ENCODE measurements at regions of chr9 and their contacts with region 1.

Region 1: DNA sequence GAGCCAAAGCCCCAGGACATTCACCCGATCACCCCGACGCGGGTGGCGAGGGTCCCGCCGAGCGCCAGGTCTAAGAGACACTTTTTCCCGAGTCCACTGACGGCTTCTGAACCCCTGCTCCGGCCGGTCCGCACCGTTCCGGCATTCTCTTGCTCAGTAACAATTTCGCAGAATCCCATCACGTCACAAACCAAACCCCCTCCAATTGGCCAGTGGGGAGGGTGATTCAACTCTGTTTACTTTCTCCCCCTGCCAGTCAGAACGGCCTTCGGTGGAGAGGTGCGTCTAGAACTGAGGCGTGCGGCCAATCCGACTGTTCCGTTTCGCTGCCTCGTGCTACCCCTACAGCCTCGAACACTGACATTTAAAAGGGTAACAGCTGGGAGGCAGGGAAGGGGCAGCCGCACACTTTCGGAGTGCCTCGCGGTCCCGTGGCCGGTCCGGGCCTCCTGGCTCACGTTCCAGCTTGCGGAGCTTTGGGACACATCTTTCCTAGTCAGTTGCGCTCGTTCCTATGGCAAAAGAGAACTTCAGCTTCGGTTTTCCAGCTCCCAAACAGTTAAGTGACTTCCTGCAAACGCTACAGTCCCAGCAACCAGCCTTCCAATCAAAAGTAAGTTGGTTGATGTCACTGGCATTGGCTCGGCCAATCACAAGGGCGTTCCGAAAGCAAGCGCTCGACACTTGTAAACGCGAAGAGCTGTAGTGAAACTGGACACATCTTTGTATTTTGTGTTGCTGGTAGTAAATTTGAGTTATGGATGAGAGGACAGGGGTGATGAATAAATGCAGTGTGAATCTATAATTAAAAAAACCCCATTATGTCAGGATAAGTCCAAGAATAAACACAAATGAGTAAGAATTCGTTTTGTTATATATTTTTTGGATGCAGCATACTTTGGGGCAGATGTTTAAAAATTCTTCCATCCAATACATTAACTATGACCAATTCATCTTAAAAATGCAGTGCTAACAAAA is at the start of gene KLF9:
- DNase-seq: peak; percentile 91
- H3K4me3 Mint-ChIP-seq: peak within 1 kb of the TSS; percentile 98
- H3K27ac Mint-ChIP-seq: peak within 1 kb of the TSS; percentile 100
- H3K4me1 Mint-ChIP-seq: peaks cover 42% of the 10 kb centered on the region
- H3K27me3 Mint-ChIP-seq: no peaks in the 10 kb centered on the region
- total RNA-seq, gene KLF9: 18.1 and 19.0 TPM in 2 replicates

Region 2: DNA sequence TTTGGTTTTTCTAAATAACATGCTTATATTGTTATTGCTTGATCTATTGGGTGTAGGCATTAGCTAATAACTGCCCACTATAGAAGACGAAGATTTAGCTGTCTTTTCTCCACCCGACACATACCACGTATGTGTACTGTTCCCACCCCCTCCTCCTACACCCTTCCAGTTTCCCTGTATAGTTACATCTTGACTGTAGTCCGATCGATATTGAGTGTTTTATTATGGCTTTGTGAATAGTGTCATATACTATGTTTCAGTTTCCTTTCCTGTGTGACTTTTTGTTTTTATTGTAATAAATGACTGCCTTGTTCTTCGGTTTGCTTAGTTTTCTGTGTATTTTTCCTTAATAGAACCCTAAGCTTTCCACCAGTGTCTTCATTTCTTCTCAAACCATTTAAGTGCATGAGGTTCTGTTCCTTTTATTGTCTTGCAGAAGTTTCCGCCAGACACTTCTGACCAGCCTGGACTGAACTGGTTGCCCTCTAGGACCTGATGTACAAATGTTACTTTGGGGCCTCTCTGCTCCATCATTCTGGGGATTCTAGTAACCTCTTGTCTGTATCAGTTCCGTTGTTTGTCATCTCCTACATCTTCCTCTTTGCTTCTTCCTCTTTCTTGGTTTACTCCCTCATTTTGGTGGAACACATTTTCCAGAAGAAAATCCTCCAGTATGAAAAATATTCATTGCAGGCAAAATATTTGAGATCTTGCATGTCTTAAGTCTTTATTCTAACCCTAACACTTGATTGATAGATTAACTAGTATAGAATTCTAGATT is 1462.0 kb before region 1 on chr9:
- intact Hi-C with region 1: no loop called
- DNase-seq: no peak
- H3K4me3 Mint-ChIP-seq: peak overlapping the region; percentile 32
- H3K27ac Mint-ChIP-seq: peak overlapping the region; percentile 81
- H3K4me1 Mint-ChIP-seq: peaks cover 79% of the 10 kb centered on the region
- H3K27me3 Mint-ChIP-seq: no peaks in the 10 kb centered on the region

Region 3: GRCh38 chr9:69035438-69036308 is 1378.4 kb before region 1 on chr9 and contains the start of gene FXN:
- intact Hi-C with region 1: loop called (anchors 5 kb)
- DNase-seq: peak; percentile 78
- H3K4me3 Mint-ChIP-seq: peak within 1 kb of the TSS; percentile 88
- H3K27ac Mint-ChIP-seq: peak within 1 kb of the TSS; percentile 78
- H3K4me1 Mint-ChIP-seq: peaks cover 15% of the 10 kb centered on the region
- H3K27me3 Mint-ChIP-seq: no peaks in the 10 kb centered on the region
- total RNA-seq, gene FXN: 43.6 and 47.7 TPM in 2 replicates

Region 4: DNA sequence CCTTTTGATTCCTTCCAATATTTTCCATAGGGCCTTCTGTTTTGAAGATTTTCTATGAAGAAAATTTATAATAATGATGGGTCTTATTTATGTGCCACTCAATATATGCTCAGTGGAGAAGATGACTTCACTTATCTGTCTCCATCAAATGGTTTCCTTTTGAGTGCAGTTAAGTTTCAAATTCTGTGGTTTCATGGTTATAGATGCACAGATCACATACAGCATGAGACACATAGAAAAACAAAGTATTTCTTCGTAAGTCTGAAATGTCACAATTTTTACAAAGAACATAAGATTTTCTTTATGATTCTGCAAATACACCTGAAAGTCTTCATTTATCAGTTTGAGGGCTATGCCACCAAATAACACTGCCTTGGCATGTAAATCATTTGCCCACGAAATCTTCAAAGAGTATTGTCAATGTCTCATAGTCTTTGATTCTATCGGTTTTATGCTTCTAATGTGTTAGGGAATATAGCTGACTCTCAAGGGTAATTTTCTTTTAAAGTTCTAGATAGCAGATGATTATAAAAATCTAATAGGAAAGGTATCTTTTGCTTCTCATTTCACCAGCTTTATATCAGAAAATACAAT is 579.4 kb before region 1 on chr9:
- intact Hi-C with region 1: loop called (anchors 1 kb)
- DNase-seq: no peak
- H3K4me3 Mint-ChIP-seq: no peak overlapping the region
- H3K27ac Mint-ChIP-seq: no peak overlapping the region
- H3K4me1 Mint-ChIP-seq: peaks cover 52% of the 10 kb centered on the region
- H3K27me3 Mint-ChIP-seq: no peaks in the 10 kb centered on the region

Region 5: GRCh38 chr9:70398145-70398556 is 15.9 kb before region 1 on chr9:
- intact Hi-C with region 1: loop called (anchors 1 kb)
- DNase-seq: no peak
- H3K4me3 Mint-ChIP-seq: peak overlapping the region; percentile 67
- H3K27ac Mint-ChIP-seq: peak overlapping the region; percentile 49
- H3K4me1 Mint-ChIP-seq: peaks cover 44% of the 10 kb centered on the region
- H3K27me3 Mint-ChIP-seq: no peaks in the 10 kb centered on the region

Region 6: GRCh38 chr9:70602321-70603019 is 188.4 kb after region 1 on chr9:
- intact Hi-C with region 1: loop called (anchors 1 kb)
- DNase-seq: peak; percentile 23
- H3K4me3 Mint-ChIP-seq: no peak overlapping the region
- H3K27ac Mint-ChIP-seq: no peak overlapping the region
- H3K4me1 Mint-ChIP-seq: peaks cover 5% of the 10 kb centered on the region
- H3K27me3 Mint-ChIP-seq: peaks cover 2% of the 10 kb centered on the region

Region 7: GRCh38 chr9:71911253-71912074 is 1497.4 kb after region 1 on chr9 and contains the start of gene C9orf85:
- intact Hi-C with region 1: loop called (anchors 2 kb)
- DNase-seq: peak; percentile 97
- H3K4me3 Mint-ChIP-seq: peak within 1 kb of the TSS; percentile 99
- H3K27ac Mint-ChIP-seq: peak within 1 kb of the TSS; percentile 96
- H3K4me1 Mint-ChIP-seq: peaks cover 64% of the 10 kb centered on the region
- H3K27me3 Mint-ChIP-seq: no peaks in the 10 kb centered on the region
- total RNA-seq, gene C9orf85: 9.3 and 9.8 TPM in 2 replicates

Measured in activated T-helper 1 cell treated with anti-CD3 and anti-CD28 coated beads, Interleukin-12 subunit alpha, Interleukin-12 subunit beta, Interleukin-2, Interleukin-4 antibody, amounts not matched to agents 30 ng/mL and 10 ng/mL and 1 ng/mL, durations not matched to agents 14 hours and 24 hours and 36 hours (primary cell).